ENCODE measurements at regions of chrX and their contacts with region 1.

Region 1: GRCh38 chrX:27186664-27187063 is 276.5 kb downstream of the PPP4R3C start:
- DNase-seq: peak; percentile 55
- H3K4me3 Mint-ChIP-seq: no peak overlapping the region
- H3K27ac Mint-ChIP-seq: no peak overlapping the region
- H3K4me1 Mint-ChIP-seq: no peaks in the 10 kb centered on the region
- H3K27me3 Mint-ChIP-seq: no peaks in the 10 kb centered on the region
- CTCF ChIP-seq: peak; percentile 57

Region 2: DNA sequence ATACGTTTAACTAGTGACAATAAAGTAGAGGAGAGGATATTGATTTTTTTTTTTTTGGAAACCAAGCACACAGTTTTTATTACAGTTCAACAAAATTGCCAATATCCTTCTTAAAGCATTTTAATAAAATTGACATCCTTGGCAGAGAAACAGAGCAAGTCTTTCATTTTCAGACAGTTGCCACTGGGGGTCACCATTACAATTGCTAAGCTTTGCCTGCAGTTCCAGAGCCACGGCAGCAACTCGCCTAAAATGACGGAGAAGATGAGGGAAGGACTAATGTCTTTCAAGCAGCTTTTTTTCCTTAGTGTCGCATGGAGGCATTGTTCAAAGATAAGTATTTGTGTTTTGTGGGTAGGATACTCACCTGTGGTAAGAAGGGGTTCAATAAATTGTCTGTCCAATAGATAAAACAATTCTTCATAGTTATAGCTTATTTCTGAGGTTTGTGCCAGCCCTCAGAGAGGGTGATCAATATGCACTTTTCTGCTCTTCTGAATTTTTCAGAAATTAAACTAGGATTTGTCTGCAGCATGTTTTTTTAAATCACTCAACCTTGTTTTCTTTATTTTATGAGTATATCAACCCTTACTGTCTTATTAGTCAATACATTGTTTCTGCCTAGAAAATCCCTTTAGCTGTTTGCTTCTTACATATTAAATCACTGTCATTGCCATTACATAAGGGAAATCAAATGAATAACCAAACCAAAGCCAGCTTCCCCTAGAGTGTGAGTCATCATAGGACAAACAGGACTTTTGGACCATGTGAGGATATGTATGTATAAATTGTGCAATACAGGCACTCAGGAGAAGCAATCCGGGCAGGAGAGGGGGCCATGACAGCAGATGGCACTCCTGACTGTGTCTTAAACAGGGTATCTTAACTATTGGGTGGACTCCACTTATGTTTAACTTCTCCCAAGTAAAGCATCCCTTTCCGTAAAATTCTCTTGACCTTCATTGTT is 1662.8 kb before region 1 on chrX:
- CTCF ChIA-PET with region 1: no interaction called
- POLR2A ChIA-PET with region 1: no interaction called
- intact Hi-C with region 1: loop called (anchors 5 kb)
- DNase-seq: peak; percentile 68
- H3K4me3 Mint-ChIP-seq: peak overlapping the region; percentile 33
- H3K27ac Mint-ChIP-seq: no peak overlapping the region
- H3K4me1 Mint-ChIP-seq: peaks cover 13% of the 10 kb centered on the region
- H3K27me3 Mint-ChIP-seq: no peaks in the 10 kb centered on the region
- CTCF ChIP-seq: peak; percentile 29

Region 3: GRCh38 chrX:26442340-26442739 is 744.3 kb before region 1 on chrX:
- CTCF ChIA-PET with region 1: interaction called, 3 read pairs
- POLR2A ChIA-PET with region 1: no interaction called
- intact Hi-C with region 1: loop called (anchors 5 kb)
- DNase-seq: peak; percentile 44
- H3K4me3 Mint-ChIP-seq: no peak overlapping the region
- H3K27ac Mint-ChIP-seq: no peak overlapping the region
- H3K4me1 Mint-ChIP-seq: no peaks in the 10 kb centered on the region
- H3K27me3 Mint-ChIP-seq: no peaks in the 10 kb centered on the region
- CTCF ChIP-seq: peak; percentile 43

Region 4: GRCh38 chrX:26783512-26784225 is 403.0 kb before region 1 on chrX:
- CTCF ChIA-PET with region 1: interaction called, 3 read pairs
- POLR2A ChIA-PET with region 1: no interaction called
- intact Hi-C with region 1: loop called (anchors 1 kb)
- DNase-seq: peak; percentile 44
- H3K4me3 Mint-ChIP-seq: no peak overlapping the region
- H3K27ac Mint-ChIP-seq: no peak overlapping the region
- H3K4me1 Mint-ChIP-seq: peaks cover 5% of the 10 kb centered on the region
- H3K27me3 Mint-ChIP-seq: no peaks in the 10 kb centered on the region
- CTCF ChIP-seq: peak; percentile 49

Region 5: GRCh38 chrX:26851981-26852380 is 334.7 kb before region 1 on chrX:
- CTCF ChIA-PET with region 1: interaction called, 42 read pairs
- POLR2A ChIA-PET with region 1: no interaction called
- intact Hi-C with region 1: loop called (anchors 1 kb)
- DNase-seq: peak; percentile 48
- H3K4me3 Mint-ChIP-seq: no peak overlapping the region
- H3K27ac Mint-ChIP-seq: no peak overlapping the region
- H3K4me1 Mint-ChIP-seq: no peaks in the 10 kb centered on the region
- H3K27me3 Mint-ChIP-seq: no peaks in the 10 kb centered on the region
- CTCF ChIP-seq: peak; percentile 28

Region 6: GRCh38 chrX:26925088-26925487 is 261.6 kb before region 1 on chrX:
- CTCF ChIA-PET with region 1: no interaction called
- POLR2A ChIA-PET with region 1: no interaction called
- intact Hi-C with region 1: loop called (anchors 5 kb)
- DNase-seq: peak; percentile 46
- H3K4me3 Mint-ChIP-seq: no peak overlapping the region
- H3K27ac Mint-ChIP-seq: no peak overlapping the region
- H3K4me1 Mint-ChIP-seq: peaks cover under 1% of the 10 kb centered on the region
- H3K27me3 Mint-ChIP-seq: no peaks in the 10 kb centered on the region
- CTCF ChIP-seq: no peak

Measured in MCF 10A (cell line).